H1 (cell line): ENCODE measurements at regions of chr11 and their contacts with region 1.

Region 1: DNA sequence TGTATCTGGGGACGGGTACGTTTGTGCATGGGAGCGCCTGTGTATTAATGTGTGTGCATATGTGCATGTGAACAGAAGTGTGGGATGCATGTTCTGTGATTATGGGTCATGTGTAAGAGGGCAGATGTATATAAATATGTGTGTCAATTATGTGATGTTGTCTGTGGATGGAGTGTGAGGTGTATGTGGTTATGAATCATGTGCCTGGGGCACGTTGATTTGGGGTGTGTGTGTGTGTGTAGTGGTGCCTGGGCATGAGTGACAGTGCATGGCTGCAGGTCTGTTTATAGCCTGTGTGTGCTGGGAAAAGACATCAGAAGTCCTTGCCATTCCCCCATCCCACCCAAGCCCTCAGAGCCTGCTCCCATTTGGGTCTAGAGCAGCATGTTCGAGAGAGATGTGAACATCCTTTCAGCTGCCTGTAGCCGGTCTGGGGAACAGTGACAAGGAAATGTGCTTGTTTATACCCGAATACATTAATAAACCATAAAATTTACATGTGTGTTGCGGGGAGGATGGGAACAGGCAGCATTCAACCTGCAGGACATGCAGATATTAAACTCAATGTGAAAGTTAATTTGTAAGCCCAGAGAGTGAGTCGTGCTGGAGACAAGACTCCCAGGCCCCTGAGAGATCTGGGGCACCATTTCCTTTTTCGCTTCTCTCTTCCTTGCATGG is 129.0 kb downstream of the NECTIN1 start:
- DNase-seq: no peak
- H3K4me3 ChIP-seq: no peak overlapping the region
- H3K27ac ChIP-seq: no peak overlapping the region
- H3K4me1 ChIP-seq: peaks cover 0 to 7% (median 3%) of the 10 kb centered on the region in 4 experiments; a peak in 2 of 7 replicates
- H3K27me3 ChIP-seq: peaks cover 0 to 5% (median 0%) of the 10 kb centered on the region in 4 experiments; a peak in 2 of 7 replicates
- CTCF ChIP-seq: no peak
- EP300 ChIP-seq: no peak
- POLR2A ChIP-seq: no peak
- RAD21 ChIP-seq: no peak

Region 2: GRCh38 chr11:119445850-119446249 is 154.2 kb before region 1 on chr11:
- CTCF ChIA-PET with region 1: no interaction called
- POLR2A ChIA-PET with region 1: no interaction called
- DNase-seq: no peak
- H3K4me3 ChIP-seq: no peak overlapping the region
- H3K27ac ChIP-seq: no peak overlapping the region
- H3K4me1 ChIP-seq: peaks cover 0 to 6% (median 1%) of the 10 kb centered on the region in 4 experiments; a peak in 1 of 7 replicates
- H3K27me3 ChIP-seq: 0 out of 7 replicates have a peak, but pooled peaks cover 0 to 3% (median 0%) of the 10 kb centered on the region in 4 experiments
- CTCF ChIP-seq: no peak
- EP300 ChIP-seq: no peak
- POLR2A ChIP-seq: no peak
- RAD21 ChIP-seq: no peak

Region 3: DNA sequence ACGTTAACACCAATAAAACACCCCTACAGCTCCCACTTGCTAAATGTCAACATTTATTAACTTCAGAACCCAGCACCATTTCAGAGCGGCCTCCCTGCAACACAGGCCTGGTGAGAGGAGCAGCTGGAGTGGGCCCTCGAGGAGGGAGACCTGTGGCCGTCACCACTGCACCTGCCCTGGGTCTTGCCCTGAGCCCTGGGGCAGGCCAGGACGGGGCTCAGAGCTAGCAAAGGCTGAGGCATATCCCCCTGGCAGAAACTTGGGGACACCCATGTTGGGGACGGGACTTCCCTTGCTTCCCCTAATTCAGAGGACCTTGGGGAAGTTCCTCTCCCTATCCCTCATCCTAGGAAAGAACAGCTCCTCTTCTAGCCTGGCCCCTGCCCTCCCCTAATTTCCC is 39.7 kb before region 1 on chr11:
- CTCF ChIA-PET with region 1: interaction called, 22 read pairs
- POLR2A ChIA-PET with region 1: no interaction called
- DNase-seq: no peak
- H3K4me3 ChIP-seq: no peak overlapping the region
- H3K27ac ChIP-seq: no peak overlapping the region
- H3K4me1 ChIP-seq: no peaks in the 10 kb centered on the region; a peak in 1 of 7 replicates
- H3K27me3 ChIP-seq: no peaks in the 10 kb centered on the region; a peak in 1 of 7 replicates
- CTCF ChIP-seq: no peak
- EP300 ChIP-seq: no peak
- POLR2A ChIP-seq: no peak
- RAD21 ChIP-seq: no peak

Region 4: GRCh38 chr11:119615003-119615881 is 15.2 kb after region 1 on chr11:
- CTCF ChIA-PET with region 1: interaction called, 130 read pairs
- POLR2A ChIA-PET with region 1: no interaction called
- DNase-seq: no peak
- H3K4me3 ChIP-seq: no peak overlapping the region
- H3K27ac ChIP-seq: no peak overlapping the region
- H3K4me1 ChIP-seq: peaks cover 4 to 14% (median 9%) of the 10 kb centered on the region in 4 experiments; a peak in 6 of 7 replicates
- H3K27me3 ChIP-seq: peaks cover 0 to 2% (median 0%) of the 10 kb centered on the region in 4 experiments; a peak in 2 of 7 replicates
- CTCF ChIP-seq: no peak
- EP300 ChIP-seq: no peak
- POLR2A ChIP-seq: no peak
- RAD21 ChIP-seq: no peak